Gastrocnemius medialis (tissue), 4 donors: ENCODE measurements at regions of chr1 and their contacts with region 1.

Region 1: DNA sequence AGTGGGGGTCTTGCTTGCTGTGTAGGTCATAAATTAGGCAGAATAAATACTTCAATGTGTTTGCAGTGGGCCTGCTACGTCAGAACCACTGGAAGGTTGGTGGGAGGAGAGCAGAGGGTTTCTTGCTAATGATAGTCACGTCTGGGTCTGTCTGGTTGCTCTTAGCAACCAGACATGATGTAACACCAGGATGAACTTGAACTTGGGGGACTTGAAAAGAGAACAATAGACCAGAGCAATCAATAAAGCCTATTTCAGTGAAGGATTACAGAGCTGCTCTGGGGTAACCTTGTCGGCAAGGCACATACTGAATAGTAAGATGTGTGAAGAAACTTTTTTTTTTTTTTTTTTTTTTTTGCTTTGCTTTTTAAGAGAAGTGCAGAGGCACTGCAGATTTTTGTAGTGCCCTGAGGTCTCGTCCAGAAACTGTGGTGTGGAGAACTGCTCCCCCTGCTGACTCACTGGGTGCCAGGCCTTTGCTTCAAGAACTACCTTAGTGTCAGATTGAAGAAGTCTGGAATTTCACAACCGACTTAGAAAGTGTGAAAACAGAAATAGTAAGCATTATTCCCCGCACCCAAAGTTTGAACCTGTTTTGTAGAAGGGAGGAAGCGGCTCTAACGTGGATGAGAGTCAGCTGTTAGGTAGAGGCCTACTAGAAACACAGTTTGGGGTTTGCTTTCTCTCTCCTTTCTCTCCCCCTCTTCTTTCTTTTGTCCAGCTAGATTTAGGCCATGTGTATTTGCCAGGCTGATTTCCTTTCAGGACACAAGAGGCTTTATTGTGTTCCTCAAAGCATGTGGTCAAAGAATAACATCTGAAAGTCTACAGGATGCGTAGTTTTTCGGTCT is 271.6 kb downstream of the TM2D1 start:
- DNase-seq: peak; percentile 85 to 89
- ATAC-seq: peak; percentile 71 to 75
- H3K4me3 ChIP-seq: no peak overlapping the region
- H3K27ac ChIP-seq: peak overlapping the region; percentile 70 to 82 (median 73)
- H3K4me1 ChIP-seq: peaks cover 60 to 61% of the 10 kb centered on the region in 2 donors
- H3K27me3 ChIP-seq: no peaks in the 10 kb centered on the region
- CTCF ChIP-seq: peak; percentile 65 to 82 (median 73)
- POLR2A ChIP-seq: no peak

Region 2: DNA sequence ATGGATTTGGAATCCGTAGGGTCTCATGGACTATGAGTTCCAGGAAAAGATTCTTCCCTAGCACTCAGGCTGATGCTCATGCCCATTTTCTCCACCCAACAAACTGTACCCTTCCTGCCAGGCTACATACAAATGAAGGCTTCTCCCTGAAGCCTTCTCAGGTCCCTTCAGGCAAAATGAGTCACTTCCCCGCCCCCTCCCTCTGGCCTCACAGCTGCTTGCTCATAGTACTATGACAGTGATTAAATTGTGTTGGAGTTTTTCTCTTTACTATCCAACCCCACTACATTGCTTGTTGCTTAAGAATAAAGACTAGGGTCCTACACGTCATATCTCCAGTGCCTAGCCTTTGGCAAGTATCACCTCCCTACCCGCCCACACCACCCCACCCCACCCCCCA is 578.6 kb before region 1 on chr1:
- in situ Hi-C with region 1: loop called in 1 of 4 experiments (anchors 25 kb)
- intact Hi-C with region 1: no loop called
- DNase-seq: peak in 1 of 2 donors; percentile 21
- ATAC-seq: peak; percentile 62 to 70
- H3K4me3 ChIP-seq: no peak overlapping the region
- H3K27ac ChIP-seq: no peak overlapping the region
- H3K4me1 ChIP-seq: no peaks in the 10 kb centered on the region
- H3K27me3 ChIP-seq: no peaks in the 10 kb centered on the region
- CTCF ChIP-seq: no peak
- POLR2A ChIP-seq: no peak

Region 3: GRCh38 chr1:60978421-60979357 is 474.6 kb before region 1 on chr1:
- in situ Hi-C with region 1: loop called in 1 of 4 experiments (anchors 10 kb)
- intact Hi-C with region 1: no loop called
- DNase-seq: peak; percentile 15 to 39
- ATAC-seq: peak; percentile 82 to 88
- H3K4me3 ChIP-seq: no peak overlapping the region
- H3K27ac ChIP-seq: no peak overlapping the region
- H3K4me1 ChIP-seq: no peaks in the 10 kb centered on the region
- H3K27me3 ChIP-seq: no peaks in the 10 kb centered on the region
- CTCF ChIP-seq: peak in 4 of 5 experiments; percentile 26 to 55 (median 42)
- POLR2A ChIP-seq: no peak

Region 4: GRCh38 chr1:61141288-61142042 is 311.9 kb before region 1 on chr1:
- in situ Hi-C with region 1: no loop called
- intact Hi-C with region 1: no loop called
- DNase-seq: peak; percentile 62 to 73
- ATAC-seq: peak; percentile 76 to 84
- H3K4me3 ChIP-seq: peak overlapping the region in 3 of 4 donors; percentile 1 to 32 (median 12)
- H3K27ac ChIP-seq: peak overlapping the region; percentile 74 to 81 (median 78)
- H3K4me1 ChIP-seq: peaks cover 49 to 55% of the 10 kb centered on the region in 2 donors
- H3K27me3 ChIP-seq: no peaks in the 10 kb centered on the region
- CTCF ChIP-seq: no peak
- POLR2A ChIP-seq: no peak

Region 5: DNA sequence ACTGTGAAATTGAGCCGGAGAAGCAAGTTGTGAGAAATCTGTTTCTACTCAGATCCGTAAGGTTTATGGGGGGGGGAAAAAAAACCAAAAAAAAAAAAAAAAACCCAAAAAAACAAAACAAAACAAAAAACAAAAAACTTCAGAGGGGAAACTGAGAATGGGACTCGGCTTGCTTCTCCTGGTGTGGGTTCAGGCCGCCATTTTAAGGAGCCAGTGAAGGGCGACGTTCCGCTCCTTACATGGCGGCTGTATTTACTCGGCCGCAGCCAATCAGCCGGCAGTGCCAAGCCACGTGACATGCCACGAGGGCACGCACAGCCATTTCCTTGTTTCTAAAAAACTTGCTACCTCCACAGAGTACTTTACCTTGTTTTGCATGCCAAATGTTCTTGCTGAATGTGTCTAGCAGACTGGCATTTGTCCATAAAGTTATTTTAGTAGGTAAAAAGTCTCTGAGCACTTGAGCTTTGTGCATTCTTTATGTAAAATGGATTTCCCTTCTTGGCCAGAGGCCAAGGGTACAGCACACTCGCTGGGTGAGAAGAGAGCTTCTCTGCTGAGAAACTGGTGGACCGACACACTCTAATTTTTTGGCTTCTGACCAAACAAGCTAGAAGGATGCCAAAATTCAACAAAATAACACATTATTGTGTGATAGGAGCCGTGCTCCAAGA is 269.2 kb before region 1 on chr1:
- in situ Hi-C with region 1: no loop called
- intact Hi-C with region 1: loop called (anchors 5 kb)
- DNase-seq: peak; percentile 93 to 97
- ATAC-seq: peak; percentile 80 to 81
- H3K4me3 ChIP-seq: peak overlapping the region; percentile 47 to 59 (median 58)
- H3K27ac ChIP-seq: peak overlapping the region; percentile 90 to 94 (median 92)
- H3K4me1 ChIP-seq: peaks cover 73 to 84% of the 10 kb centered on the region in 2 donors
- H3K27me3 ChIP-seq: no peaks in the 10 kb centered on the region
- CTCF ChIP-seq: no peak
- POLR2A ChIP-seq: peak in 1 of 2 donors; percentile 12

Region 6: GRCh38 chr1:61337981-61338848 is 115.1 kb before region 1 on chr1:
- in situ Hi-C with region 1: no loop called
- intact Hi-C with region 1: loop called (anchors 2 kb)
- DNase-seq: peak; percentile 74 to 81
- ATAC-seq: peak; percentile 87 to 92
- H3K4me3 ChIP-seq: peak overlapping the region; percentile 32 to 41 (median 38)
- H3K27ac ChIP-seq: peak overlapping the region; percentile 75 to 83 (median 78)
- H3K4me1 ChIP-seq: peaks cover 33 to 35% of the 10 kb centered on the region in 2 donors
- H3K27me3 ChIP-seq: no peaks in the 10 kb centered on the region
- CTCF ChIP-seq: peak; percentile 70 to 86 (median 78)
- POLR2A ChIP-seq: no peak

Region 7: DNA sequence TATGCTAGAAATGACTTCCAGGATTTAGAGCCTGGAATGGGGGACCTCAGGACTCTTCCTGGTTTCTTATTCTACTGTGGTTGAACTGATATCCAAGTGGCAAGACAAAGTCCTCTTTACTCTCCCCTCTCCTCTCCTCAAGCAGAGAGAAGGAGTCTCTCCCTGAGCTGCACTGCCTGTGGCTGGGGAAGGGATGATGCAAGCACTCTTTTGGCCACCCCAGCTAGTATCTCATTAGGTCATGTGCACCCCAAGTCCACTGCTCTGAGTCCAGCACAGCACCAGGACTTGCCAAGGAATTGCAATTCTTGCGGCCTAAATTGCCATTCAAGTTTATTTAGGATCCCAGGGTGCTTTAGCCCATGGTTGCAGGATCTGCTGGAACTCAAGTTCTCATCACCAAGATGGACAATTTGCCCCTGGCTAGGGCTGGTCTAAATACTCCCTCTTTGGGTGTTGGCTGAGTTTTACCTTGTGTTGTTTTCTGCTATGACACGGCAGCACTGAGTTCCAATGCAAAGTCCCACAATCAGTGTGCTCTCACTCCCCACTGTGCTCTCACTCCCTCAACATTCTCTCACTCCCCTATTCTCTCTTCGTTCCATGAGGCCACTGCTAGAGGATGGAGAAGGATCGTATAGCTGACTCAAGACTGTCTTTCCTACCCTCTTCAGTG is 99.4 kb after region 1 on chr1:
- in situ Hi-C with region 1: no loop called
- intact Hi-C with region 1: no loop called
- DNase-seq: no peak
- ATAC-seq: no peak
- H3K4me3 ChIP-seq: no peak overlapping the region
- H3K27ac ChIP-seq: no peak overlapping the region
- H3K4me1 ChIP-seq: no peaks in the 10 kb centered on the region
- H3K27me3 ChIP-seq: no peaks in the 10 kb centered on the region
- CTCF ChIP-seq: no peak
- POLR2A ChIP-seq: no peak

Region 8: DNA sequence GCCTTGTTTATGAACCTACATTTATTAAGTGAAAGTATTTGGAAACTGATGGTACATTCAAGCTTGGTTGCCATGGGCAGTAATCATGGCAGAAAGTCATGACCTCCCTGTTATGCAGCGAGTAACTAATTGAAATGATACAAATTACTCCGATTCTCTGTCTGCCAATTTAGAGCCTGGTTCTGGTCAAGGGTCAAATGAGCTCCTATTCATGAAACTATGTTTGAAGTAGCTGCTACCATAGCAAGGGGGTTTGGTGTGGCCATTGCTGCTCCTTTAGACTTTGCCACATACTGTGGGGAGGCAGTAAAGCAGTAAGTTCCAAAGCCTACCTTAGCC is 1681.8 kb after region 1 on chr1:
- in situ Hi-C with region 1: no loop called
- intact Hi-C with region 1: no loop called
- DNase-seq: no peak
- ATAC-seq: no peak
- H3K4me3 ChIP-seq: no peak overlapping the region
- H3K27ac ChIP-seq: no peak overlapping the region
- H3K4me1 ChIP-seq: no peaks in the 10 kb centered on the region
- H3K27me3 ChIP-seq: no peaks in the 10 kb centered on the region
- CTCF ChIP-seq: no peak
- POLR2A ChIP-seq: no peak